Head of caudate nucleus (tissue), 42 donors: ENCODE measurements at regions of chr14 and their contacts with region 1.

Region 1: DNA sequence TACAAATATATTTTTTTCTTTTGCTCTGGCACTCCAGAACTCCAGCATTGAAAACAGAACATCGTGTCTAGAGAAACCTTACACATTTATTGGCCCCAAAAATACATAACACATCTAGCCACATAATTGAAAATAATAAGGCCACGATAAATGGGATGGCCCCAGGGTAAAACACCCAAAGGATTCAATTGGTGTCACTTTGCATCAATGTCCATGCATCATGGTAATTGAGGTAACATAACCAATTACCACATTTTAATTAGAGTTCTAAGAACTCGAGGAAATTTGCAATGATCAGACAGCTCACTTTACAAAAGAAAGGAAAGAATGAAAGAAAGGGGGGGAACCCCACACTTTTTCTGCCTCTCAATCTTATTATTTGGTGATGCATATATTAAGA is 151.8 kb upstream of the NPAS3 start:
- DNase-seq: no peak

Region 2: DNA sequence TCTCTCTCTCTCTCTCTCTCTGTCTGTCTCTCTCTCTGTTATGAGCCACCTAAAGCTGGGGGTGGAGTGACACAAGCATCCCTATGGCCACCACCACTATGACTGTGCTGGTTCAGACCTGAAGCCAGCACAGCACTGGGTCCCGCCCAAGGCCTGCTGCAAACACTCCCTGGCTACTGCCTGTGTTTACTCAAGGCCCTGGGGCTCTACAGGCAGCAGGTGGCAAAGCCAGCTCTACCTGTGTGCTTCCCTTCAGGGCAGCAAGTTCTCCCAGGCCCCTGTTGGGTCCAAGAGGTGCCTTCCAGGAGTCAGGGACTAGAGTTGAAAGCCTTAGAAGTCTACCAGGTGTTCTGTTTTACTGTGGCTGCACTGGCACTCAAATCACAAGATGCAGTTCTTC is 41.4 kb before region 1 on chr14:
- intact Hi-C with region 1: loop called (anchors 10 kb)
- DNase-seq: no peak